ENCODE measurements at regions of chr4 and their contacts with region 1.

Region 1: GRCh38 chr4:26860157-26860921 is at the start of gene STIM2:
- DNase-seq: peak; percentile 97
- H3K4me3 Mint-ChIP-seq: peak within 1 kb of the TSS; percentile 88
- H3K27ac Mint-ChIP-seq: peak within 1 kb of the TSS; percentile 95
- H3K4me1 Mint-ChIP-seq: peaks cover 43% of the 10 kb centered on the region
- H3K27me3 Mint-ChIP-seq: no peaks in the 10 kb centered on the region
- CTCF ChIP-seq: no peak
- total RNA-seq, gene STIM2: 17.4 and 18.5 TPM in 2 replicates

Region 2: DNA sequence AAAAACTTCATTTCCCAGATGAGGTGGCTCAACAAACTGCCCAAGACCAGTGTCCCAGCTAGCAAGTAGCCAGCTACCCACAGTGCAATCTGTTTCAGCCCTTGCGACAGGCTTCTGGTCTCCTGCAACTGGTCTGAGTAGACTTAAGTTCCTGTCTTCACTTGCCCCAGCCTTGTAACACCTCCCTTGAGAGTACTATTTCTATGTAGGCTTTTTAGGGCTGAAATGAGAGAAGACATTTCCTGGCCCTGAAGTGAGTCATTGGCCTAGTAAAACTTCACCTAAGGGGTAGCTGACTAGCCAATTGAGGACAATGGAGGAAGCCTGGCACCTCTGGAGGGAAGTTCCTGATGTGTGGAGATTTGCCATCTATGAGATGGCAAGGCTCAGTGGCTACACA is 79.8 kb before region 1 on chr4:
- CTCF ChIA-PET with region 1: interaction called, 4 read pairs
- POLR2A ChIA-PET with region 1: interaction called, 75 read pairs
- intact Hi-C with region 1: loop called (anchors 5 kb)
- DNase-seq: peak; percentile 94
- H3K4me3 Mint-ChIP-seq: no peak overlapping the region
- H3K27ac Mint-ChIP-seq: peak overlapping the region; percentile 77
- H3K4me1 Mint-ChIP-seq: peaks cover 16% of the 10 kb centered on the region
- H3K27me3 Mint-ChIP-seq: no peaks in the 10 kb centered on the region
- CTCF ChIP-seq: no peak

Region 3: GRCh38 chr4:26873391-26874026 is 13.2 kb after region 1 on chr4:
- CTCF ChIA-PET with region 1: interaction called, 3 read pairs
- POLR2A ChIA-PET with region 1: interaction called, 97 read pairs
- intact Hi-C with region 1: no loop called
- DNase-seq: no peak
- H3K4me3 Mint-ChIP-seq: no peak overlapping the region
- H3K27ac Mint-ChIP-seq: no peak overlapping the region
- H3K4me1 Mint-ChIP-seq: peaks cover 15% of the 10 kb centered on the region
- H3K27me3 Mint-ChIP-seq: no peaks in the 10 kb centered on the region
- CTCF ChIP-seq: no peak

Region 4: DNA sequence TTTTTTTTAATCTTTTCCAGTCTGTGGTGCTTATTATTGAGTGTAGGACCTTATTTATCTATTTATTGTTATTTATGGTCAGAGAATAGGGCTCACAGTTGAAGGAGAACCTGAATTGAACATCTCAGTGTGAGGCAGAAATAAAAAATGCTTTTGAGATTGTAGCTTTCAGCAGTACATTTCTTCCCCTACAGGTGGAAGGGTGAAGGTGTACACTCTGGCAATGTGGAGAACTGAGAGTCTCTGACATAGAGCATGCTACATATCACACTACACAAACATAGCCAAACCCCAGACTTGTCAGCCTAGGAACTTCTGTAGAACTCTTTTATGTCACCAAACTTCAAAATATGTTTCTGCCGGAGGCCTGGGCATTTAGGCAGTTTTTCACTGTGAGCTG is 140.5 kb after region 1 on chr4:
- CTCF ChIA-PET with region 1: interaction called, 3 read pairs
- POLR2A ChIA-PET with region 1: interaction called, 75 read pairs
- intact Hi-C with region 1: no loop called
- DNase-seq: peak; percentile 23
- H3K4me3 Mint-ChIP-seq: no peak overlapping the region
- H3K27ac Mint-ChIP-seq: no peak overlapping the region
- H3K4me1 Mint-ChIP-seq: no peaks in the 10 kb centered on the region
- H3K27me3 Mint-ChIP-seq: no peaks in the 10 kb centered on the region
- CTCF ChIP-seq: no peak